ENCODE measurements at regions of chr19 and their contacts with region 1.

Region 1: DNA sequence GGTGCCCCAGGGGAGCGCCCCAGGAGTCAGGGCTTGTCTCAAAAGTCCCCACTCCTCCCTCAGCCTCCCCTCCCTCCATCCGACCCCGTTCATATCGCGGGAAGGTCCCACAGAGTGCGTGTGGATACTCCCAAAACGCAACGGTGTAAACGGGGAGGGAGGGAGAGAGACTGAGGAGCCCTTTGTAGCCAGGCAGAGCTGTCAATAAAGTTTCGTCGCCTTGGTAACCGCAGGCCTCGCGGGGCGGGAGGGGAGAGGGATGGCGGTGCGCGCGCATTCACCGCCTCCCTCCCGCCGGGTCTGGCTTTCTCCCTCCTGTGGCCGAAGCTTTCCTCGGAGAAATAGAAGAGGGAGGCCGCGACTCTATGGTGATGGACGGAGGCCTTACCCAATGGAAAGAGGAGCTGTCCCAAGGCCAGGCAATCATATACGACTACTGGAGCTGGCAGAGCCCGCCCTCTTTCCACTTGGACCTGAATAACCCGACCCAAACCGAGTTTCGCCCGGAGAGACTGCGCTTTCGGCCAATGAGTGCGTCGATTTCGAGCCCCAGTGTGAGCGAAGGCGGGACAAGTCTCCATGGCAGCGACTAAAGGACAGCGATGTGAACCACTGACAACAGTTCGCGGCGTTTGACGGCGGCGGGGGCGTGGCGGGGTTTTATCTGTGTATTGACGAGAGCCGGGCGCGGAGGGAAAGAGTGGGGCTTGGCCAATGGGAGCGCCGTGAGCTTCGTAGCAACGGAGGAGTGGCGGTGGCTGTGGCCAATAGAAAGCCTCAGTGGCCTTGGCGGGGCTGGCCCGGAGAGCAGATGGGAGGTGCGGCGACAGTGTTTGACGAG is at the start of gene KMT5C:
- DNase-seq: peak; percentile 99 to 100 (median 100)
- ATAC-seq: peak; percentile 91
- H3K4me3 ChIP-seq: peak within 1 kb of the TSS; percentile 92
- H3K27ac ChIP-seq: peak within 1 kb of the TSS; percentile 97
- H3K4me1 ChIP-seq: peaks cover 7 to 46% of the 10 kb centered on the region in 2 experiments; a peak in 4 of 5 replicates
- H3K27me3 ChIP-seq: no peaks in the 10 kb centered on the region
- CTCF ChIP-seq: peak; percentile 30 to 48 (median 40); a peak in 5 of 6 replicates
- EP300 ChIP-seq: no peak
- POLR2A ChIP-seq: no peak; the same call in 1 of the 2 replicates
- RAD21 ChIP-seq: no peak
- polyA plus RNA-seq, gene KMT5C: 0.15 to 0.17 TPM

Region 2: GRCh38 chr19:55258828-55259539 is 80.3 kb before region 1 on chr19 and contains the start of gene PPP6R1:
- CTCF ChIA-PET with region 1: no interaction called
- POLR2A ChIA-PET with region 1: interaction called, 10 read pairs
- in situ Hi-C with region 1: no loop called
- intact Hi-C with region 1: no loop called
- DNase-seq: peak; percentile 97 to 99 (median 98)
- ATAC-seq: peak; percentile 90
- H3K4me3 ChIP-seq: peak within 1 kb of the TSS; percentile 94
- H3K27ac ChIP-seq: peak within 1 kb of the TSS; percentile 97
- H3K4me1 ChIP-seq: peaks cover 34 to 53% of the 10 kb centered on the region in 2 experiments; a peak in 4 of 5 replicates
- H3K27me3 ChIP-seq: no peaks in the 10 kb centered on the region
- CTCF ChIP-seq: no peak
- EP300 ChIP-seq: peak; percentile 86
- POLR2A ChIP-seq: peak; percentile 92
- RAD21 ChIP-seq: peak; percentile 53 to 57
- polyA plus RNA-seq, gene PPP6R1: 0.48 to 0.89 TPM

Region 3: GRCh38 chr19:55301459-55302317 is 37.6 kb before region 1 on chr19:
- CTCF ChIA-PET with region 1: no interaction called
- POLR2A ChIA-PET with region 1: no interaction called
- in situ Hi-C with region 1: no loop called
- intact Hi-C with region 1: loop called (anchors 5 kb)
- DNase-seq: peak; percentile 94 to 99 (median 99)
- ATAC-seq: peak; percentile 83
- H3K4me3 ChIP-seq: peak overlapping the region; percentile 41
- H3K27ac ChIP-seq: peak overlapping the region; percentile 50
- H3K4me1 ChIP-seq: peaks cover 17 to 57% of the 10 kb centered on the region in 2 experiments; a peak in 4 of 5 replicates
- H3K27me3 ChIP-seq: no peaks in the 10 kb centered on the region
- CTCF ChIP-seq: peak; percentile 86 to 93 (median 90)
- EP300 ChIP-seq: no peak
- POLR2A ChIP-seq: peak; percentile 61
- RAD21 ChIP-seq: peak; percentile 43 to 67

Region 4: GRCh38 chr19:55322204-55322885 is 16.9 kb before region 1 on chr19:
- CTCF ChIA-PET with region 1: no interaction called
- POLR2A ChIA-PET with region 1: interaction called, 14 read pairs
- in situ Hi-C with region 1: no loop called
- intact Hi-C with region 1: no loop called
- DNase-seq: no peak
- ATAC-seq: no peak
- H3K4me3 ChIP-seq: no peak overlapping the region
- H3K27ac ChIP-seq: no peak overlapping the region
- H3K4me1 ChIP-seq: peaks cover 8 to 47% of the 10 kb centered on the region in 2 experiments; a peak in 4 of 5 replicates
- H3K27me3 ChIP-seq: no peaks in the 10 kb centered on the region
- CTCF ChIP-seq: no peak
- EP300 ChIP-seq: no peak
- POLR2A ChIP-seq: no peak
- RAD21 ChIP-seq: no peak

Region 5: GRCh38 chr19:55353803-55354697 is 14.8 kb after region 1 on chr19:
- CTCF ChIA-PET with region 1: no interaction called
- POLR2A ChIA-PET with region 1: interaction called, 14 read pairs
- in situ Hi-C with region 1: no loop called
- intact Hi-C with region 1: no loop called
- DNase-seq: peak; percentile 82 to 97 (median 97)
- ATAC-seq: peak; percentile 96
- H3K4me3 ChIP-seq: peak overlapping the region; percentile 64
- H3K27ac ChIP-seq: peak overlapping the region; percentile 49; the same call in 2 of the 3 replicates
- H3K4me1 ChIP-seq: peaks cover 4 to 50% of the 10 kb centered on the region in 2 experiments; a peak in 4 of 5 replicates
- H3K27me3 ChIP-seq: peaks cover 9 to 21% of the 10 kb centered on the region in 2 experiments; a peak in 4 of 5 replicates
- CTCF ChIP-seq: no peak
- EP300 ChIP-seq: no peak
- POLR2A ChIP-seq: no peak
- RAD21 ChIP-seq: no peak

Region 6: DNA sequence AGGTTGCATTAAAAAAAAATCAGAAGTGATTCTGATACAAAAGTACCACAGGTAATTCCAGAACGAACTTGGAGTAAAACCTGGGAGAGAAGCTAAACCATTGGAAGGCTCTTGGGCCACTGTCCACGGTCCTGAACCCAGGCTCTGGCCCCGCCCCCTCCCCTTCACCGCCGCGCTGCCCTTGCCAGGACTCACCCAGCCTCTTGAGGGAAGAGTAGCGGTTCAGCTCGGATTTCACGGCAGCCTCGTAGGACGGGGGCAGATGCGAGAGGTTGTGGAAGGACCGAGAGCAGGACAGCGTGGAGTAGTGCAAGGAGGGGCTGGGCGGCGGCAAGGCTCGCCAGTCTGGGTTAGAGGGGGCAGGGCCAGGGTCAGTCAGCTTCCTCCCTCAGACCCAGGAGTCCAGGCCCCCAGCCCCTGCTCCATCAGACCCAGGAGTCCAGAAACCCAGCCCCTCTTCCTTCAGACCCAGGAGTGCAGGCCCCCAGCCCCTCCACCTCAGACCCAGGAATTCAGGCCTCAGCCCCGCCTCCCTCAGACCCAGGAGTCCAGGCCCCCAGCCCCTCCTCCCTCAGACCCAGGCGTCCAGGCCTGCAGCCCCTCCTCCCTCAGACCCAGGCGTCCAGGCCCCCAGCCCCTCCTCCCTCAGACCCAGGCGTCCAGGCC is 98.3 kb after region 1 on chr19:
- CTCF ChIA-PET with region 1: no interaction called
- POLR2A ChIA-PET with region 1: no interaction called
- in situ Hi-C with region 1: no loop called
- intact Hi-C with region 1: no loop called
- DNase-seq: peak; percentile 78 to 86 (median 83)
- ATAC-seq: peak; percentile 75
- H3K4me3 ChIP-seq: no peak overlapping the region
- H3K27ac ChIP-seq: no peak overlapping the region
- H3K4me1 ChIP-seq: peaks cover 10 to 43% of the 10 kb centered on the region in 2 experiments
- H3K27me3 ChIP-seq: peaks cover 0 to 9% of the 10 kb centered on the region in 2 experiments; a peak in 2 of 5 replicates
- CTCF ChIP-seq: no peak
- EP300 ChIP-seq: no peak
- POLR2A ChIP-seq: no peak
- RAD21 ChIP-seq: no peak

Region 7: DNA sequence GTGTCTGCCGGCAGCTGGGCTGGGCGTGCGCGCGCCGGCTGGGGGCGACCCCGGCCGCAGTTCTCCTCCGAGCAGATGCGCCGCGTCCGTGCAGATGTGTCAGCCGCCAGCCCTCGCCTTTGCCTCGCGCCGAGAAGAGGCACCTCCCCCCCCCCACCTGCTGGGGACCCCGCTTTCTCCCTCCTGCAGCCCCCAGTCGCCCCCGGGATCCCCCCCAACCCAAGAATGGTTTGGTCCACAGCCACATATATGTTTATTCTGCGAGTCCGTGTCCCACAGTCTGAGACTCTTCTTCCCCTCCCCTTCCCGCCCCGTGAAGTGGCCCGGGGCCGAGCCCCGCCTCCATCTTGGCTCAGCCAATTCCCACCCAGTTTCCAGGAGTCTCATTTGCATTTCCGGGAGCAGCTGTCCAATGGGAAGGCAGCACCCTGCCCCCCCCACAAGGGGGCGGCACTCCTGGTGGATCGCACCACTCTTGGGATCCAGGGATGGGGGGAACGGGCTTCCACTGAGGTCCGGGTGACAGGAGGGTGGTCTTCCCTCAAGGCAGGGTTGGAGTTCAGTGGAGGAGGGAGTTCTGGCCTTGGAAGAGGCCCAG is 113.6 kb after region 1 on chr19:
- CTCF ChIA-PET with region 1: no interaction called
- POLR2A ChIA-PET with region 1: no interaction called
- in situ Hi-C with region 1: no loop called
- intact Hi-C with region 1: no loop called
- DNase-seq: peak; percentile 88 to 99 (median 94)
- ATAC-seq: peak; percentile 98
- H3K4me3 ChIP-seq: peak overlapping the region; percentile 28
- H3K27ac ChIP-seq: no peak overlapping the region
- H3K4me1 ChIP-seq: peaks cover 0 to 70% of the 10 kb centered on the region in 2 experiments
- H3K27me3 ChIP-seq: peaks cover 0 to 7% of the 10 kb centered on the region in 2 experiments; a peak in 4 of 5 replicates
- CTCF ChIP-seq: no peak
- EP300 ChIP-seq: no peak
- POLR2A ChIP-seq: no peak; the same call in 1 of the 2 replicates
- RAD21 ChIP-seq: no peak

Measured in K562 (cell line).